CD4-positive, alpha-beta memory T cell (primary cell): ENCODE measurements at regions of chr19 and their contacts with region 1.

Region 1: GRCh38 chr19:14136509-14137281 is at the start of gene ASF1B:
- DNase-seq: peak; percentile 98 to 99 (median 99)
- H3K4me3 ChIP-seq: peak within 1 kb of the TSS; percentile 73 to 77
- H3K4me3 Mint-ChIP-seq: peak within 1 kb of the TSS; percentile 92 to 100 (median 95)
- H3K27ac ChIP-seq: peak within 1 kb of the TSS; percentile 93
- H3K27ac Mint-ChIP-seq: peak within 1 kb of the TSS; percentile 85 to 98 (median 96)
- H3K4me1 ChIP-seq: peaks cover 18% of the 10 kb centered on the region
- H3K4me1 Mint-ChIP-seq: peaks cover 13 to 33% (median 21%) of the 10 kb centered on the region in 4 donors
- H3K27me3 ChIP-seq: no peaks in the 10 kb centered on the region
- H3K27me3 Mint-ChIP-seq: no peaks in the 10 kb centered on the region
- total RNA-seq, gene ASF1B: 2.3 to 3.0 TPM

Region 2: DNA sequence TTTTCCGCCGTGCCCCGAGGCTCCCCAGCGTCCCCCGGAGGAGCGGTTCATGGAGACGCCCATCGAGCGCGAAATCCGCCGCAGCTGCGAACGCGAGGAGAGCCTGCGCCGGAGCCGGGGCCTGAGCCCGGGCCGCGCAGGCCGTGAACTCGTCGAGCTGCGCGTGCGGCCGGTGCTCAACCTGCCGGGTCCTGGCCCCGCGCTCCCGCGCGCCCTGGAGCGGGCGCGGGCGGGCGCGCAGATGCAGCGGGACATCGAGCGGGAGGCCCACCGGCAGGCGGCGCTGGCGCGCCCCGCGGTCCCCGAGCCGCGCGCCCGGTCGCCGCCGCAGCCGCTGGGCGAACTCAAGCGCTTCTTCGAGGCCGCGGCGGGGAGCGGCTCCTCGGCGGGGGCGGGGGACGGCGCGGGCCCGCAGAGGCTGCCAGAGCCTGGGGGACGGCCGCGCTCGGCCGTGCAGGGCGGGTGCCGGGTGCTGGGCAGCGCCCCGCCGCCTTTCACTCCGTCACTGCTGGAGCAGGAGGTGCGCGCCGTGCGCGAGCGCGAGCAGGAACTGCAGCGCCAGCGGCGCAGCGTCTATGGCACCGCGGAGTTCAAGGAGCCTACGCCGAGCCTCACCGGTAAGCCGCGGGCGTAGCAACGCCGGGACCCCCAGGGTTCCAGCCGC is 63.3 kb before region 1 on chr19:
- CTCF ChIA-PET with region 1: interaction called, 10 read pairs
- POLR2A ChIA-PET with region 1: interaction called, 19 read pairs
- intact Hi-C with region 1: loop called (anchors 1 kb)
- DNase-seq: peak; percentile 80 to 88 (median 84)
- H3K4me3 ChIP-seq: peak overlapping the region; percentile 70 to 90
- H3K4me3 Mint-ChIP-seq: peak overlapping the region; percentile 89 to 98 (median 93)
- H3K27ac ChIP-seq: peak overlapping the region; percentile 61
- H3K27ac Mint-ChIP-seq: peak overlapping the region; percentile 70 to 97 (median 88)
- H3K4me1 ChIP-seq: peaks cover 31% of the 10 kb centered on the region
- H3K4me1 Mint-ChIP-seq: peaks cover 7 to 28% (median 15%) of the 10 kb centered on the region in 4 donors
- H3K27me3 ChIP-seq: no peaks in the 10 kb centered on the region
- H3K27me3 Mint-ChIP-seq: no peaks in the 10 kb centered on the region

Region 3: GRCh38 chr19:14117668-14118164 is 19.0 kb before region 1 on chr19 and contains the start of gene PRKACA:
- CTCF ChIA-PET with region 1: interaction called, 9 read pairs
- POLR2A ChIA-PET with region 1: interaction called, 40 read pairs
- intact Hi-C with region 1: loop called (anchors 1 kb)
- DNase-seq: peak; percentile 97 to 99 (median 99)
- H3K4me3 ChIP-seq: peak within 1 kb of the TSS; percentile 57 to 63
- H3K4me3 Mint-ChIP-seq: peak within 1 kb of the TSS; percentile 92 to 98 (median 96)
- H3K27ac ChIP-seq: peak within 1 kb of the TSS; percentile 73
- H3K27ac Mint-ChIP-seq: peak within 1 kb of the TSS; percentile 95 to 98 (median 98)
- H3K4me1 ChIP-seq: peaks cover 41% of the 10 kb centered on the region
- H3K4me1 Mint-ChIP-seq: peaks cover 23 to 50% (median 39%) of the 10 kb centered on the region in 4 donors
- H3K27me3 ChIP-seq: no peaks in the 10 kb centered on the region
- H3K27me3 Mint-ChIP-seq: no peaks in the 10 kb centered on the region
- total RNA-seq, gene PRKACA: 48.9 to 51.7 TPM

Region 4: DNA sequence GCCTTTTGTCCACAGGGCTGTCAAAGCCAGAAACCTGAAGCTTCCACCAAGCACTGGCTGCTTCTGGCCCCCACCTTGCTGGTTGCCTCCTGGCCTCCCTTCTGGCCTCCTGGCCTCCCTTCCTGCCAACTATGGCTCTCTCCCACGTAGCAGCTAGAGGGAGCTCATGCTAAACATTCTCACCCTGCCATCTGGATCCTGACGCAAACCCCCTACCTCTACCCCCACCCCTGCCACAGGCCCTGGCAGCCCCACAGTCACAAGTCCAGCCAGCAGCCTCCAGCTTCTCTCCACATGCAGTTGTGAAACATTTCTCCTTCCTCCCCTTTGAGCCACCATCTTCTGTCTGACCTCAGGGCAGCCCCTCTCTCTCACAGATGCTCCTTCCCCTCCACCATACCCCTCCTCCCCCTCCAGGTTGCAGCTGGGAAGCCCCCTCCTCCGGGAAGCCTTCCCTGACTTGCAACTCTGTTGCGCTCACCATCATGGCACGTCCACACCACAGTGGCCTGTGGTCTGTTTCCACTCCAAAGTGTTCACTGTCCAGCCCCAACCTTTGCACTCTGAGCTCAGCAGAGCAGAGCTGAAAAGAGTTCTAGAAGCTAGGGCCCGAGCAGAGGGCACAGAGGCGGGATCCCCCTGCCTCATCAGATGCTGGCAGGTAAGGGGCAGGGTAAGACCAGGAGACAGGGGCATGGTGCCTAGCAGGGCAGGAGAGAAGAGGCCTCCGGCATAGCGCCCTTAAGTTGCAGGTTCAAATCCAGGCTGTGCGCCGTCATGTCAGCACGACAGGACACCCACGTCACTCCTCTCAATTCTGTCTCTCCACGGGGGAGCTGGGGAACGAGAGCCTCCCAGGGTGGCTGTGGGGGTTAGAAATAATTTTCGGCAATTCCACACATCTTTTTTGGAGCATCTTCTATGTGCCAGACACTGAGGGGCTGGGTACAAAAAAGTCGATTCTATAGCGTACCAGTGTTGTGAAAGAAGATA is 62.0 kb after region 1 on chr19:
- CTCF ChIA-PET with region 1: interaction called, 18 read pairs
- POLR2A ChIA-PET with region 1: interaction called, 3 read pairs
- intact Hi-C with region 1: loop called (anchors 2 kb)
- DNase-seq: no peak
- H3K4me3 ChIP-seq: no peak overlapping the region
- H3K4me3 Mint-ChIP-seq: no peak overlapping the region
- H3K27ac ChIP-seq: no peak overlapping the region
- H3K27ac Mint-ChIP-seq: no peak overlapping the region
- H3K4me1 ChIP-seq: peaks cover 3% of the 10 kb centered on the region
- H3K4me1 Mint-ChIP-seq: peaks cover 15 to 47% (median 33%) of the 10 kb centered on the region in 4 donors
- H3K27me3 ChIP-seq: no peaks in the 10 kb centered on the region
- H3K27me3 Mint-ChIP-seq: peaks cover 0 to 1% of the 10 kb centered on the region in 2 donors

Region 5: GRCh38 chr19:14383661-14384555 is 247.2 kb after region 1 on chr19:
- CTCF ChIA-PET with region 1: interaction called, 5 read pairs
- POLR2A ChIA-PET with region 1: interaction called, 11 read pairs
- intact Hi-C with region 1: no loop called
- DNase-seq: peak in 3 of 5 donors; percentile 40 to 91 (median 41)
- H3K4me3 ChIP-seq: peak overlapping the region; percentile 40 to 82
- H3K4me3 Mint-ChIP-seq: peak overlapping the region; percentile 91 to 99 (median 98)
- H3K27ac ChIP-seq: peak overlapping the region; percentile 99
- H3K27ac Mint-ChIP-seq: peak overlapping the region; percentile 96 to 100 (median 98)
- H3K4me1 ChIP-seq: peaks cover 41% of the 10 kb centered on the region
- H3K4me1 Mint-ChIP-seq: peaks cover 19 to 66% (median 37%) of the 10 kb centered on the region in 4 donors
- H3K27me3 ChIP-seq: no peaks in the 10 kb centered on the region
- H3K27me3 Mint-ChIP-seq: peaks cover 0 to 4% of the 10 kb centered on the region in 2 donors

Region 6: DNA sequence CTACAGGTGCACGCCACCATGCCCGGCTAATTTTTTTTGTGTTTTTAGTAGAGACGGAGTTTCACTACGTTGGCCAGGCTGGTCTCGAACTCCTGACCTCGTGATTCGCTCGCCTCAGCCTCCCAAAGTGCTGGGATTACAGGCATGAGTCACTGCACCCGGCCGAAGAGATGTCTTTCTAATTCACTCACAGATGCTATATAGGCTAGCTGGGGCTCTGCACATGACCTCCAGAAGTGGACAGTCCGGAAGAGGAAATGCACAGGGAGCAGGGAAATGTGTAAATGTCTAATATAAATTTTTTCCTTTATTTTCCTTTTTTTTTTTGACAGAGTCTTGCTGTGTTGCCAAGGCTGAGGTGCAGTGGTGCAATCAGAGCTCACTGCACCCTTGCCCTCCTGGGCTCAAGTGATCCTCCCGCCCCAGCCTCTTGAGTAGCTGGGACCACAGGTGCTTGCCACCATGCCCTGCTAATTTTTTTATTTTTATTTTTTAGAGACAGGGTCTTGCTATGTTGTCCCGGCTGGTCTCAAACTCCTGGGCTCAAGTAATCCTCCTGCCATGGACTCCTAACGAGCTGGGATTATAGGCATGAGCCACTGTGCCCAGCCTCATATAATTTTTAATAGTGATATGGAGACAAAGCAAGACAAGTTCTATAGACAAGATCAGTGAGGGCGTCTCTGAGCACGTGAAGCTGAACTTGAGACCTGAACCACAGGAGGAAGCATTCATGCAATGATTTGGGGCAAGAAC is 350.9 kb after region 1 on chr19:
- CTCF ChIA-PET with region 1: interaction called, 14 read pairs
- POLR2A ChIA-PET with region 1: no interaction called
- intact Hi-C with region 1: loop called (anchors 1 kb)
- DNase-seq: no peak
- H3K4me3 ChIP-seq: no peak overlapping the region
- H3K4me3 Mint-ChIP-seq: no peak overlapping the region
- H3K27ac ChIP-seq: no peak overlapping the region
- H3K27ac Mint-ChIP-seq: no peak overlapping the region
- H3K4me1 ChIP-seq: peaks cover 5% of the 10 kb centered on the region
- H3K4me1 Mint-ChIP-seq: peaks cover 7 to 9% (median 8%) of the 10 kb centered on the region in 4 donors
- H3K27me3 ChIP-seq: no peaks in the 10 kb centered on the region
- H3K27me3 Mint-ChIP-seq: no peaks in the 10 kb centered on the region